ENCODE measurements at regions of chr14 and their contacts with region 1.

Region 1: GRCh38 chr14:54175298-54175942 is 218.8 kb upstream of the BMP4 start:
- DNase-seq: peak; percentile 46
- CTCF ChIP-seq: peak; percentile 69

Region 2: DNA sequence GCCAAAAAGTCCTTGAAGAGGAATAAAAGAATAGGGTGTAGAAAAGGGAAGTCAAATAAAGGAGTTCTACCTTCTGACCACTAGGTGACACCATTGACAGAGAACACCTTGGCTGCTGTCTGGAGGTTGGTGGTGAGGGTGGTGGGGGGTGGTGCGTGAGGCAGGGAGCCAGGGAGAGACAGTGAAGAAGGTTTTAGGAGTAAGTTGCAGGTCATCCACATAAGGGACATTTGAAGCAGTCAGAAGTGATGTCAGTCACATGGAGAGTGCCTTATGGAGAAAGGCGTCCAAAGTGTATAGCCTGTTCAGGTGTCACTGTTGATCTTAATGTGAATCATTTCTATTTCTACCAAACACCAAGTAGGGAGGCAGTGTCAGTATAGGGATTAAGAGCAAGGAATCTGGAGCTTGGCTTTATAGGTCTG is 743.0 kb before region 1 on chr14:
- CTCF ChIA-PET with region 1: interaction called, 10 read pairs
- POLR2A ChIA-PET with region 1: no interaction called
- DNase-seq: peak; percentile 60
- CTCF ChIP-seq: peak; percentile 63

Region 3: GRCh38 chr14:53539489-53540126 is 635.8 kb before region 1 on chr14:
- CTCF ChIA-PET with region 1: interaction called, 47 read pairs
- POLR2A ChIA-PET with region 1: no interaction called
- DNase-seq: peak; percentile 51
- CTCF ChIP-seq: peak; percentile 93

Region 4: GRCh38 chr14:53824061-53824460 is 351.4 kb before region 1 on chr14:
- CTCF ChIA-PET with region 1: no interaction called
- POLR2A ChIA-PET with region 1: no interaction called
- DNase-seq: no peak
- CTCF ChIP-seq: no peak

Region 5: GRCh38 chr14:54152351-54152750 is 23.1 kb before region 1 on chr14:
- CTCF ChIA-PET with region 1: interaction called, 13 read pairs
- POLR2A ChIA-PET with region 1: no interaction called
- DNase-seq: no peak
- CTCF ChIP-seq: no peak

Region 6: DNA sequence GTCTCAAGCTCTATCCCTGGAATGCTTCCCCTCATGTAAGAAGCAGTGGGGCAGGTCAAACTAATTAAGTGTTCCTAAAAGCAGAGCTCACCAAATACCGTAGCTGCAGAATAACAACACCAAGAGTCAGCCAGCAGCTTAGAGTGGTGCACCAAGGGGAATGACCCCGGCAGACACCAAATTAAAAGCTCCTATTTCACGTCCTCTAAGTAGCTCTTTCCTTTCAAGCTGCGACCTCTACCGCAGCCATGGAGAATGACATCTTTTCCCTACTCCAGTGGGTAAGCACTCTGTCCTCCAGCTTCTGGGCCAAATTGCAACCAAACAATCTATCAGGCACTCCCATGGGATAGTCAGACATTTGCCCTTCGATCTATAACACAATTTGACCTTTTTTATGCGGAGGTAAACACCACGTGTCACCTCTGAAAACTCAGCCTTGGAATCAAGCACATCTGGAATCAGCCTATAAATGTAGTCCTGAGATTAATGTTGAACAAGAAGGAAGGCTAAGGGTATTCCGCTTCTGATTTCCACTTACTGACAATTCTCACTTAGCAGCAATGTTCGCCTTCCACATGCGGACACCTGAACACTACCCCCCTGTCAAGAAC is 153.8 kb after region 1 on chr14:
- CTCF ChIA-PET with region 1: interaction called, 10 read pairs
- POLR2A ChIA-PET with region 1: no interaction called
- DNase-seq: peak; percentile 50
- CTCF ChIP-seq: peak; percentile 80